ENCODE measurements at regions of chr14 and their contacts with region 1.

Region 1: DNA sequence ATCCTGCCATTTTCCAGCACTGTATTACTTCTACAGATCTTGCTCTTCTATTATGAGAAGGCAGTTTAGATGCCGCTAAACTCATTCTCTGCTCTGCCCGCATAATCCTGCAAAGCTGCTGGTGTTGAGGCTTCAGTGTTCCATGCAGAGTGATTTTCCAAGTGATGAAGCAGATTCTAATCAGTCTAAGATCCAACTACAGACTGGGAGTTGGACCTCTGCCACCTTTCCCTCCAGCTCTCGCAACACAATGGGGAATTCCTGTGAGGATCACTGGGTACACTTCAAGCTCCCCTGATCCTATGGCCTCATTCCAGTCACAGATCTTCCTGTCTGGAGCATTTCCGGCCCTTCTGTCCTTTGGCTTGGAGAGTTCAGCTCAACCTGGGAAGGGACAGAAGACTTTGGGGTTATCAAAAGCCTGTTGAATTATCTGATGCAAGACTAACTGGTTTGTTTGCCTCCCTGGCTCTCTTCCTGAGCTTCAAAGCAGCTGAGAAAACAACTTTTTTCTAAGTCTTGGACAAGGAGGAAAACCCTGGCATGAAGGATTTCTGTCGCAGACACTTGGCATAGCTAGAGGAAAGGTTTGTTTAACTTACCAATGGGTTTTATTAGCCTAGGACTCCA is 333.9 kb downstream of the ZFP36L1 start:
- DNase-seq: no peak
- ATAC-seq: no peak
- H3K4me3 ChIP-seq: no peak overlapping the region
- H3K4me3 Mint-ChIP-seq: no peak overlapping the region
- H3K27ac ChIP-seq: no peak overlapping the region
- H3K27ac Mint-ChIP-seq: no peak overlapping the region
- H3K4me1 ChIP-seq: no peaks in the 10 kb centered on the region
- H3K4me1 Mint-ChIP-seq: peaks cover 5% of the 10 kb centered on the region
- H3K27me3 ChIP-seq: no peaks in the 10 kb centered on the region
- H3K27me3 Mint-ChIP-seq: no peaks in the 10 kb centered on the region
- CTCF ChIP-seq: no peak

Region 2: DNA sequence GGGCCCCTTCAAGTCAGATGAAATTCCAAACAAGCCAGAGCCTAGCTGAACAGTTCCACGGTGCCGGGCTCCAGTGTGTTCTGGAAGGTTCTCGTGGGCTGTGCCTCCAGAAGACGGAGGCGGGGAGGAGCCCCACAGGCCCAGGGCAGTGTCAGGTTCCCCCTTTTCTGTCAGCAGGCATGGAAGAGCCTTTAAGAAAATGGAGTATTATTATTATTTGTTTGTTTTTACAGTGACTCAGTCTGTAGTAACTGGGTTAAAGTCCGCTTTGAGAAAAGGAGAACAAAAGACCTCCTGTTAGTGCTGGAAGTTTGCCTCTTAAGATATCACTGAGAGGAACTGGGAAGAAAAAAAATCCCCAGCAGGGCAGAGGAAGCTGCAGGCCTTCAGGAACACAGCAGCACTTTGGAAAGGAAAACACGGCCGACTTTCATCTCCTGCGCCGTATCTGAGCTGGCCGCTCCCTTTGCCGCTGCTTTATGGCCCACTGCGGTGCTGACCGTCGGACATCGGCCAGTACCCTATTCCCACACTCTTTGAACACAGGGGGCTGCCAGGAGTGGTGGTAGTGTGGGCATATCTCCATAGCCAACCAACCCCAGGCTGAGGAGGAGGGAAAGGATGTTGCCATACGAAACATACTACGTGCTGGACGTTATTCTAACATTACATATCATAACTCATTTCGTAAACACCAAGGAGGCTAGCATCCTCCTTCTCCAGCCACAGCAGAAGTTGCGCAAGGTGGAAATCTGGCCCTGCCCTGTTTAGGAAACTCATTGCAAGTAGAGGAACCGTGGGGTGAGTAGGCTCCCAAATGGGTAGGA is 139.9 kb after region 1 on chr14:
- CTCF ChIA-PET with region 1: no interaction called
- POLR2A ChIA-PET with region 1: no interaction called
- intact Hi-C with region 1: loop called in 1 of 2 experiments (anchors 10 kb)
- DNase-seq: peak in 1 of 9 experiments; percentile 18
- ATAC-seq: no peak
- H3K4me3 ChIP-seq: no peak overlapping the region
- H3K4me3 Mint-ChIP-seq: no peak overlapping the region
- H3K27ac ChIP-seq: no peak overlapping the region
- H3K27ac Mint-ChIP-seq: no peak overlapping the region
- H3K4me1 ChIP-seq: peaks cover 8% of the 10 kb centered on the region
- H3K4me1 Mint-ChIP-seq: peaks cover 9% of the 10 kb centered on the region
- H3K27me3 ChIP-seq: no peaks in the 10 kb centered on the region
- H3K27me3 Mint-ChIP-seq: no peaks in the 10 kb centered on the region
- CTCF ChIP-seq: no peak